CD8-positive, alpha-beta T cell (primary cell): ENCODE measurements at regions of chr19 and their contacts with region 1.

Region 1: GRCh38 chr19:55503502-55504251 is 15.4 kb downstream of the SSC5D start:
- DNase-seq: peak; percentile 86 to 98 (median 93)
- ATAC-seq: peak; percentile 94
- H3K4me3 ChIP-seq: peak overlapping the region; percentile 57 to 66
- H3K4me3 Mint-ChIP-seq: peak overlapping the region; percentile 77
- H3K27ac ChIP-seq: peak overlapping the region; percentile 49 to 75
- H3K27ac Mint-ChIP-seq: peak overlapping the region; percentile 80
- H3K4me1 ChIP-seq: peaks cover 4% of the 10 kb centered on the region
- H3K4me1 Mint-ChIP-seq: peaks cover 12% of the 10 kb centered on the region
- H3K27me3 ChIP-seq: peaks cover 0 to 2% of the 10 kb centered on the region in 2 experiments
- H3K27me3 Mint-ChIP-seq: peaks cover 2% of the 10 kb centered on the region
- CTCF ChIP-seq: peak; percentile 99

Region 2: DNA sequence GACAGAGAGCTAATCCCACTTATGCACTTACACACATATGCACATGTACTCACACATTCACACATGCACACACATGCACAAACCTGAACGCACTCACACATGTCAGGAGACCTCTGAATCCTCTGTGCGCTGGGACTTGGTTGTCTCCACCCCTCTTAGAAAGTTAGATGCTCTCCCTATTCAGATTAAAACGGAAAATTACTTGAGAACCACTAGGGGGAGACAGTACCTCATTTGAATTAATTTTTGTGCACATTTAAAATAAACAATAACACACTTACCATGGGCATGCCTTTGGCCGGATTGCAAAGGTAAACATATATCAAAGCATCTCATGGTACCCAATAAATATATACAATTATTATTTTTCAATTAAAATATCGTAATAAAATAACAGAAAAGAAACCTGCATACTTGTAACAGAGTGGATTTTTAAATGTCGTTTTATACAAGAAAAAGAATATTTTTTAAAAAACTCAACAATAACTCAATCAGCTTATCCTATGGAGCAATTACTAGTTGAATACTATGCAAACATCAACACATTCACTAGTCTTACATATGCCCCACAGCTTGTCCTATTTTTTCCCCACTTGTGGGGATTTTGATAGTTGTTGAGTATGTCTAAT is 850.4 kb before region 1 on chr19:
- CTCF ChIA-PET with region 1: no interaction called
- POLR2A ChIA-PET with region 1: no interaction called
- intact Hi-C with region 1: loop called in 1 of 2 experiments (anchors 5 kb)
- DNase-seq: peak in 2 of 9 experiments; percentile 35 to 55
- ATAC-seq: no peak
- H3K4me3 ChIP-seq: no peak overlapping the region
- H3K4me3 Mint-ChIP-seq: no peak overlapping the region
- H3K27ac ChIP-seq: no peak overlapping the region
- H3K27ac Mint-ChIP-seq: no peak overlapping the region
- H3K4me1 ChIP-seq: no peaks in the 10 kb centered on the region
- H3K4me1 Mint-ChIP-seq: no peaks in the 10 kb centered on the region
- H3K27me3 ChIP-seq: no peaks in the 10 kb centered on the region
- H3K27me3 Mint-ChIP-seq: peaks cover 13% of the 10 kb centered on the region
- CTCF ChIP-seq: peak; percentile 64

Region 3: GRCh38 chr19:55132453-55133129 is 371.1 kb before region 1 on chr19:
- CTCF ChIA-PET with region 1: interaction called, 13 read pairs
- POLR2A ChIA-PET with region 1: interaction called, 3 read pairs
- intact Hi-C with region 1: no loop called
- DNase-seq: no peak
- ATAC-seq: no peak
- H3K4me3 ChIP-seq: no peak overlapping the region
- H3K4me3 Mint-ChIP-seq: no peak overlapping the region
- H3K27ac ChIP-seq: no peak overlapping the region
- H3K27ac Mint-ChIP-seq: no peak overlapping the region
- H3K4me1 ChIP-seq: no peaks in the 10 kb centered on the region
- H3K4me1 Mint-ChIP-seq: no peaks in the 10 kb centered on the region
- H3K27me3 ChIP-seq: peaks cover 0 to 13% of the 10 kb centered on the region in 2 experiments
- H3K27me3 Mint-ChIP-seq: peaks cover 38% of the 10 kb centered on the region
- CTCF ChIP-seq: no peak

Region 4: DNA sequence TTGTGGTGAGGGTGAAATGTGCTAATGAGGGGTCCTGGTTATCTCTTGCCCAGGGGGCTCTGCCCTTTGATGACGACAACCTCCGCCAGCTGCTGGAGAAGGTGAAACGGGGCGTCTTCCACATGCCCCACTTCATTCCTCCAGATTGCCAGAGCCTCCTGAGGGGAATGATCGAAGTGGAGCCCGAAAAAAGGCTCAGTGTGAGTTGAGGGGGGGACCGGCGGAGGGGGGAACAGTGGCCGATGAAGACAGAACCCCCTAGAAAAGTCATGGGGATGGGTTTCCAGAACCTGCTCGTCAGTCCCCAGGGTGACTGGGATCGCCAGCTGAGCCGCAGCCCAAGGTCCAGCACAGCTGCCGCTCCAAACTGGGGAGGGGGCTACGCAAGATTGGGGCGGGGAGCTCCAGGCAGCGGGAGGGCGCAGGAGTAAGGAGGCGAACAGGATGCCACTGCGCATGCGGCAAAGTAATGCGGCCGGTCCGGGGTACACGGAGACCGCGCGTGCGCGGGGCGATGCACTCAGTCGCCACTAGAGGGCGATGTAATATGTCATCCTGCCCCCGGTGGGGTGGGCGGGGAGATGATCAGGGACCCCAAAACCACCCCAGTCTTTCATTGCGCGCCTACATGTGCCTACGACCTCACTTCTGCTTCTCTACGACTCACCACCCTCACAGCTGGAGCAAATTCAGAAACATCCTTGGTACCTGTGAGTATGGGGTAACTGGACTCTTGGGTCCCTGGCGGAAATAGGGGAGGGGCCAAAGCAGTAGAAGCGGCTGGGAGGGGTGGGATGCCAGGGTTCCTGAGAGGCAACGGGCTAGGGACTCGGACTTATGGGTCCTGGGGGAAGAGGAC is 202.0 kb before region 1 on chr19:
- CTCF ChIA-PET with region 1: interaction called, 4 read pairs
- POLR2A ChIA-PET with region 1: no interaction called
- intact Hi-C with region 1: loop called in 1 of 2 experiments (anchors 1 kb)
- DNase-seq: peak; percentile 89 to 99 (median 94)
- ATAC-seq: peak; percentile 88
- H3K4me3 ChIP-seq: peak overlapping the region; percentile 46 to 83
- H3K4me3 Mint-ChIP-seq: peak overlapping the region; percentile 85
- H3K27ac ChIP-seq: peak overlapping the region; percentile 48 to 54
- H3K27ac Mint-ChIP-seq: peak overlapping the region; percentile 92
- H3K4me1 ChIP-seq: peaks cover 11% of the 10 kb centered on the region
- H3K4me1 Mint-ChIP-seq: peaks cover 12% of the 10 kb centered on the region
- H3K27me3 ChIP-seq: no peaks in the 10 kb centered on the region
- H3K27me3 Mint-ChIP-seq: no peaks in the 10 kb centered on the region
- CTCF ChIP-seq: peak; percentile 89

Region 5: GRCh38 chr19:55484593-55485438 is 18.9 kb before region 1 on chr19 and contains the start of gene NAT14:
- CTCF ChIA-PET with region 1: interaction called, 15 read pairs
- POLR2A ChIA-PET with region 1: no interaction called
- intact Hi-C with region 1: loop called (anchors 1 kb)
- DNase-seq: peak; percentile 34 to 82 (median 63)
- ATAC-seq: peak; percentile 70
- H3K4me3 ChIP-seq: peak within 1 kb of the TSS; percentile 56 to 90
- H3K4me3 Mint-ChIP-seq: peak within 1 kb of the TSS; percentile 78
- H3K27ac ChIP-seq: peak within 1 kb of the TSS; percentile 70 to 81
- H3K27ac Mint-ChIP-seq: peak within 1 kb of the TSS; percentile 80
- H3K4me1 ChIP-seq: peaks cover 18% of the 10 kb centered on the region
- H3K4me1 Mint-ChIP-seq: peaks cover 15% of the 10 kb centered on the region
- H3K27me3 ChIP-seq: no peaks in the 10 kb centered on the region
- H3K27me3 Mint-ChIP-seq: no peaks in the 10 kb centered on the region
- CTCF ChIP-seq: no peak
- total RNA-seq, gene NAT14: 9.9 to 10.0 TPM

Region 6: DNA sequence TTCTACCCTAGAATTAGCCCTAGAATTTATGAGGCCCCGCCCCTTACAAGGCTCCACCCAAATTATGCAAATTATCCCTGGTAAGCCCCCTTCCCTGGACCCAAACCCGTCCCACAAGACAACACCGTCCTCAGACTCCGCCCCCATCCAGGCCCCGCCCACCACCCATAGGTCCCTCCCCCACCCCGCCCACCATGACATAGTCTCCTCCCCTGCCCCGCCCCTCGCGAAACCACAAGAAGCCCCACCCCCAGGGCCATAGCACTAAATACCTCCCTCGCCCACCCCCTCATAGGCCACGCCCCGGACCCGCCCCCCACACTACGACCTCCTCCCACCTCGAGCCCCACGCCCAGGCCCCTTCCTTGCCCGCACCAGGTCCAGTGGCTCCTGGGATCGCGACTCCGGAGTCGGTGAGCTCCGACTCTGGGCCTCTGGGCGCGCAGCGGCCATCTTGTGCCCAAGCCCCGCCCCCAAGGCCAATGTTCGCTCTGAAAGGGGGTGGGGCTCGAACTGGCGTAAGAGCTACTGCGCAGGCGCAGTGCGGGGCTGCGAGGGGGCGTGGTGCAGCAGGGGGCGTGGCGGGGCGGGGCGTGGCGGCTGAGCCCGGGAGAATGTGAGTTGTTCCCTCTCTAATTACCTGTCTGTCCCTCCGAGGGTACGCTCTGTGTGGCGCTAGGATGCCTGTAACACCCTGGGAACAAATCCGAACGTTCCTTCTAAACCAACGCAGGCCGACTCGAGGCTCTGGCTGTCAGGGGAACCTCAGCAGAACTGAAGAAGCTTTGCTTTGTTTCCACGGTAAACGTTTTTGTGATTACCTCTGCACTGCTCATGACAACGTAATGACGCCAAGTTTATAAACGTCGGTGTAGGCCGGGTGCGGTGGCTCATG is 120.7 kb after region 1 on chr19 and contains the start of gene ZNF784:
- CTCF ChIA-PET with region 1: interaction called, 20 read pairs
- POLR2A ChIA-PET with region 1: interaction called, 3 read pairs
- intact Hi-C with region 1: no loop called
- DNase-seq: peak; percentile 87 to 97 (median 93)
- ATAC-seq: peak; percentile 76
- H3K4me3 ChIP-seq: peak within 1 kb of the TSS; percentile 67 to 88
- H3K4me3 Mint-ChIP-seq: peak within 1 kb of the TSS; percentile 91
- H3K27ac ChIP-seq: peak within 1 kb of the TSS; percentile 72 to 92
- H3K27ac Mint-ChIP-seq: peak within 1 kb of the TSS; percentile 98
- H3K4me1 ChIP-seq: peaks cover 50% of the 10 kb centered on the region
- H3K4me1 Mint-ChIP-seq: peaks cover 56% of the 10 kb centered on the region
- H3K27me3 ChIP-seq: no peaks in the 10 kb centered on the region
- H3K27me3 Mint-ChIP-seq: no peaks in the 10 kb centered on the region
- CTCF ChIP-seq: no peak
- total RNA-seq, gene ZNF784: 11.7 to 12.2 TPM